GM12878 (cell line): ENCODE measurements at regions of chr15 and their contacts with region 1.

Region 1: DNA sequence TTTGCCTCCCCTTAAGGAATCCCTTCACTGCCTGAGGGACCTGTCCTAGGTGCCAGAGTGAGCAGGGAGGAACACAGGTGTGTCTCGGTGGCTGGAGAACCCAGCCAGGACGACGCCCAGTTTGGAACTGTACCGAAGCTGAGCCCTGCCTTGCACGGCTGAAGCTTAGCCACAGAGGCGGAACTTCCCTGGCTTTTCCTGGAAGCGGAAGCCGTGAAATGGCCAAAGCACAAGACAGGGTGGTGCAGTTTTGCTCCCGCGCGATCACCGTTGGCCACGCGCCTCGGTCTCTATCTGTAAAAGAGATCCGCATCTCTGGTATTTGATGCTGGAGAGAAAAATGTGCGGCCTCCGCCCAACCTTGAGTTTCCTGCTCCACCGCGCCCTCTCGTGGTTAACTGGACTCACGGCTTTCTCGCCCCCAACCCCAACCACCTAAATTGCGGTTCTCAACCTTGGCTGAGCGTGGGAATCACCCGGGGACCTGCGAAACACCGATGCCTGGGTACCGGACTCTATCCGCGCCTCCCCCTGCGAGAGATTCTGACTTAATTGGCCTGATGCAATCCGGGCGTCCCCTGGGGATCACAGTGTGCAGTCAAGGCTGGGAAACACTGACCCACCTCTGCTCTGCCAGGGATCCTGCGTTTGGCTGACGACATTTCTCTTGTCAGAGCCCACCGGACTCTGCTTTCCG is 70.7 kb upstream of the ABHD2 start:
- DNase-seq: peak; percentile 48
- ATAC-seq: peak; percentile 95
- H3K4me3 ChIP-seq: no peak overlapping the region
- H3K27ac ChIP-seq: no peak overlapping the region
- H3K4me1 ChIP-seq: no peaks in the 10 kb centered on the region
- H3K27me3 ChIP-seq: peaks cover 1 to 9% of the 10 kb centered on the region in 2 experiments; a peak in 2 of 4 replicates
- CTCF ChIP-seq: peak; percentile 79 to 86 (median 84)
- EP300 ChIP-seq: 0 out of 4 replicates have a peak, but pooled peaks of 1 of the 2 experiments have one; percentile 14
- POLR2A ChIP-seq: no peak
- RAD21 ChIP-seq: peak; percentile 72

Region 2: DNA sequence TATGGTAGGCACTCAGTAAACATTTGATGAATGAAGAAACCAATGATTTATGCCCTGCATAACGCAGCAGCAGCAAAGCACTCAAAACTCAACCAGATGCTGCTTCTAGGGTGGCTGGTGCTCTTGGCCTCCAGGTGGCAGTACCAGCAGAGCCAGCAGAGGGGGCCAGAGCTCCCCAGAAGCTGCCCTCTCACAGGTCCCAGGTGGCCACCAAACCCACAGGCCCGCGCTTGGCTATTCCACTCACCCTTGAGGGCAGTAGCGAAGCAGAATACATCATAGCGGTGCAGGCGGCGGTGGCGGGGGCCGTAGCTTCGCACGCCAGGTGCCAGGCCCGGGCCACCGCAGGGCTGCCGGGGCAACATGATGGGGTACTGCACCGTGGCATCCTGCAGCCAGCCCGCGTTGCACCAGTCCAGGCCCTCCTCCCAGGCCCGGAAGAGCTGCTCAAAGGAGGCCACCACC is 138.8 kb before region 1 on chr15:
- CTCF ChIA-PET with region 1: interaction called, 10 read pairs
- POLR2A ChIA-PET with region 1: no interaction called
- RAD21 ChIA-PET with region 1: no interaction called
- SMC1A ChIA-PET with region 1: no interaction called
- in situ Hi-C with region 1: no loop called
- intact Hi-C with region 1: no loop called
- DNase-seq: no peak
- ATAC-seq: peak; percentile 98
- H3K4me3 ChIP-seq: no peak overlapping the region
- H3K27ac ChIP-seq: no peak overlapping the region
- H3K4me1 ChIP-seq: no peaks in the 10 kb centered on the region
- H3K27me3 ChIP-seq: no peaks in the 10 kb centered on the region
- CTCF ChIP-seq: peak; percentile 69 to 83 (median 73)
- EP300 ChIP-seq: no peak
- POLR2A ChIP-seq: no peak
- RAD21 ChIP-seq: peak; percentile 36

Region 3: GRCh38 chr15:88894348-88894818 is 123.1 kb before region 1 on chr15:
- CTCF ChIA-PET with region 1: interaction called, 3 read pairs
- POLR2A ChIA-PET with region 1: no interaction called
- RAD21 ChIA-PET with region 1: no interaction called
- SMC1A ChIA-PET with region 1: no interaction called
- in situ Hi-C with region 1: no loop called
- intact Hi-C with region 1: loop called (anchors 2 kb)
- DNase-seq: no peak
- ATAC-seq: peak; percentile 75
- H3K4me3 ChIP-seq: peak overlapping the region; percentile 38; the same call in 1 of the 2 replicates
- H3K27ac ChIP-seq: no peak overlapping the region
- H3K4me1 ChIP-seq: peaks cover 3% of the 10 kb centered on the region
- H3K27me3 ChIP-seq: peaks cover 0 to 5% of the 10 kb centered on the region in 2 experiments; a peak in 2 of 4 replicates
- CTCF ChIP-seq: peak; percentile 73 to 92 (median 82)
- EP300 ChIP-seq: no peak
- POLR2A ChIP-seq: no peak
- RAD21 ChIP-seq: peak; percentile 48

Region 4: DNA sequence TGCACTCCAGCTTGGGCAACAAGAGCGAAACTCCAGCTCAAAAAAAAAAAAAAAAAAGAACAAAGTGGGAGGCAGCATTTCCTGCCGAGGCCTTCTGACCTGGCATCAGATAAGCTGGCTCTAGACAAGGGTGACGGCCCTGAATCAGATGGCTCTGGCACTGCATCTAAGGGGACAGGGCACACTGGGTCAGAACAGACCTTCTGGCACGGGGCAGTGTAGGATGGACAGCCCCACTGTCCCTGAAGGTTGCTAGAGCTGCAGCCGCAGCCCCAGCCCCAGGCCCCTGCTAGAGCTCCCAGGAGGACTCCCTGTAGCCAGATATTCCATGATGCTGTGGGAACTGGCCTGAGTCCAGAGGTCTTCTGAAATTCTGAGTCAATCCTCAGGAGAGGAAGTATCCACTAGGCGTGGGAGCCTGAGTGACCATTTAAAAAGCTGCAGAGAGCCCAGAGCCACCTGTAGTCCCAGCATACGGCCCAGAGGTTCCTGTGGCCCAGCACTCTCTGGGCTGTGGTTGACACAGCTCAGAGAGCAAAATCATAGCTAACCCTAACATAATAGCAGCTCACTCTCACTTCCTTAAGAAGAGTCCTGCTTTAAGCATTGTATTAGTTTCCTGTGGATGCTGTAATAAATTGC is 35.1 kb before region 1 on chr15:
- CTCF ChIA-PET with region 1: interaction called, 5 read pairs
- POLR2A ChIA-PET with region 1: no interaction called
- RAD21 ChIA-PET with region 1: no interaction called
- SMC1A ChIA-PET with region 1: interaction called, 8 read pairs
- in situ Hi-C with region 1: no loop called
- intact Hi-C with region 1: loop called (anchors 1 kb)
- DNase-seq: peak; percentile 83
- ATAC-seq: peak; percentile 97
- H3K4me3 ChIP-seq: no peak overlapping the region
- H3K27ac ChIP-seq: no peak overlapping the region
- H3K4me1 ChIP-seq: peaks cover 19% of the 10 kb centered on the region
- H3K27me3 ChIP-seq: no peaks in the 10 kb centered on the region
- CTCF ChIP-seq: no peak
- EP300 ChIP-seq: peak; percentile 56 to 82; a peak in 3 of 4 replicates
- POLR2A ChIP-seq: no peak
- RAD21 ChIP-seq: no peak